ENCODE measurements at regions of chr5 and their contacts with region 1.

Region 1: GRCh38 chr5:172383191-172383802 is 71.0 kb downstream of the SH3PXD2B start:
- DNase-seq: peak; percentile 65 to 72
- H3K4me3 ChIP-seq: no peak overlapping the region
- H3K4me3 Mint-ChIP-seq: peak overlapping the region; percentile 37
- H3K27ac Mint-ChIP-seq: peak overlapping the region; percentile 63
- H3K4me1 ChIP-seq: peaks cover 28% of the 10 kb centered on the region
- H3K4me1 Mint-ChIP-seq: peaks cover 33% of the 10 kb centered on the region
- H3K27me3 ChIP-seq: no peaks in the 10 kb centered on the region
- H3K27me3 Mint-ChIP-seq: no peaks in the 10 kb centered on the region
- CTCF ChIP-seq: no peak

Region 2: GRCh38 chr5:171537070-171537849 is 846.0 kb before region 1 on chr5:
- CTCF ChIA-PET with region 1: no interaction called
- POLR2A ChIA-PET with region 1: no interaction called
- intact Hi-C with region 1: no loop called
- DNase-seq: no peak
- H3K4me3 ChIP-seq: no peak overlapping the region
- H3K4me3 Mint-ChIP-seq: no peak overlapping the region
- H3K27ac Mint-ChIP-seq: no peak overlapping the region
- H3K4me1 ChIP-seq: no peaks in the 10 kb centered on the region
- H3K4me1 Mint-ChIP-seq: peaks cover 9% of the 10 kb centered on the region
- H3K27me3 ChIP-seq: no peaks in the 10 kb centered on the region; the same call in 1 of the 2 replicates
- H3K27me3 Mint-ChIP-seq: peaks cover 19% of the 10 kb centered on the region
- CTCF ChIP-seq: no peak

Region 3: GRCh38 chr5:171865471-171865870 is 517.8 kb before region 1 on chr5:
- CTCF ChIA-PET with region 1: no interaction called
- POLR2A ChIA-PET with region 1: interaction called, 10 read pairs
- intact Hi-C with region 1: no loop called
- DNase-seq: no peak
- H3K4me3 ChIP-seq: no peak overlapping the region
- H3K4me3 Mint-ChIP-seq: no peak overlapping the region
- H3K27ac Mint-ChIP-seq: no peak overlapping the region
- H3K4me1 ChIP-seq: no peaks in the 10 kb centered on the region
- H3K4me1 Mint-ChIP-seq: no peaks in the 10 kb centered on the region
- H3K27me3 ChIP-seq: no peaks in the 10 kb centered on the region
- H3K27me3 Mint-ChIP-seq: no peaks in the 10 kb centered on the region
- CTCF ChIP-seq: no peak

Region 4: DNA sequence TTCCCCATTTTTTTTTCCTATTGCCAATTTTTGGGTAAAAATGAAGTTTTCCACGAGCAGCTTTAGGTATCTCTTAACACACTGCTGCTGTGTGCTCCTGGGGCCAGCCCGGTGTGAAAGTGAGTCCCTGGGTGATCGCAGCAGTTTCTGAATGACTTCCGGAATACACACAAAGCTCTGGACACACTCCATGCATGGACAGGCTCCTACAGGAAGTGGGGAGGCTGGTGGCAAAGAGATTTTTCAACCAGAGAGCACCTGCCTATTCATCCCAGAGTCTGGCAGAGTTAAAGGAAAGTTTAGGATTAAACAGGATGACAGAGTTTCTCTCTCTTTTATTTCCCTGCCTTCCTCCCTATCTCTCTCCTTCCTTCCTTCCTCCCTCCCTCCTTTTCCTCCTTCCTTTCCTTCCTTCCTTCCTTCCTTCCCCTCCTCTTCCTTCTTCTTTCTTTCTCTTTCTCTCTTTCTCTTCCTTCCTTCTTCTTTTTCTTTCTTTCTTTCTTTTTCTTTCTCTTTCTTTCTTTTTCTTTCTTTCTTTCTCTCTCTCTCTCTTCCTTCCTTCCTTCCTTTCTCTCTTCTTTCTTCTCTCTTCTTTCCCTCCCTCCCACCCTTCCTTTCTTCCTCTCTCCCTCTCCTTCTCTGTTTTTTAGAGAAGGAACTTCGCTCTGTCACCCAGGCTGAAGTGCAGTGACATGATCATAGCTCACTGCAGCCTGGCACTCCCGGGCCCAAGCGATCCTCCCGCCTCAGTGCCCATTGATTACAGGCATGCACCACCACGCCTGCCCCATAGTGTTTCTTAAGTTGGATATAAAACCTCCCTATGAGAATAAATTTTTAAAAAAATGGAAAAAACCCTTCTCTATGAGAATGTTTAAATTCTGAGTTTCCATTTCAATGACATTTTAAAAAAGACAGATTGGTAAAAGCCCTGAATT is 61.0 kb before region 1 on chr5:
- CTCF ChIA-PET with region 1: no interaction called
- POLR2A ChIA-PET with region 1: no interaction called
- intact Hi-C with region 1: no loop called
- DNase-seq: no peak
- H3K4me3 ChIP-seq: no peak overlapping the region
- H3K4me3 Mint-ChIP-seq: no peak overlapping the region
- H3K27ac Mint-ChIP-seq: no peak overlapping the region
- H3K4me1 ChIP-seq: 0 out of 2 replicates have a peak, but pooled peaks cover 5% of the 10 kb centered on the region
- H3K4me1 Mint-ChIP-seq: no peaks in the 10 kb centered on the region
- H3K27me3 ChIP-seq: no peaks in the 10 kb centered on the region
- H3K27me3 Mint-ChIP-seq: no peaks in the 10 kb centered on the region
- CTCF ChIP-seq: no peak

Region 5: DNA sequence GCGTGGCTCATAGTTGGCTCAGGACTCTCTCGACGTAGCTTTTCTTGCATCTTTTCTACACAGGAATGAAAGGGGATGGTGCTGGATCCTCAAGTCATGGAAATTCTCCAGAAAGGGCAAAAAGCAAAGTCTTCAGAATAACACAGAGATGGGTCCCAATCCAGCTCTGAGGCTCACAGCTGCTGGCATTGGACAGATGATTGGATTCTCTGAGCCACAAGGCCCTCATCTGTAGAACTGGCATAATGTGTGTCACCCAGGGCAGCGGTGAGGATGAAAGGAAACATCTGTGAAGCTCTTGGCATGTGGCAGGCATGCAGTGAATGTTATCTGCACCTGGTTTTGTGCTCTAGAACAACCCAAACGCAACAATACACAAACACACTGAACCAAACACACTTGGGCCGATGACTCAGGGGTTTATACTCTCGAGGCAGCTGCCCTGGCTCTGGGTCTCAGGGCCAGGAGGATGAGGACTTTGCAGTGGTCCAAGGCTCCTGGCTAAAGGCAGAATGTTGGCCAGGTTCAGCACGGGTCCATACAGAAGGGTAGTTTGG is 35.7 kb before region 1 on chr5:
- CTCF ChIA-PET with region 1: no interaction called
- POLR2A ChIA-PET with region 1: no interaction called
- intact Hi-C with region 1: loop called (anchors 1 kb)
- DNase-seq: peak in 1 of 2 experiments; percentile 18
- H3K4me3 ChIP-seq: no peak overlapping the region
- H3K4me3 Mint-ChIP-seq: peak overlapping the region; percentile 45
- H3K27ac Mint-ChIP-seq: peak overlapping the region; percentile 90
- H3K4me1 ChIP-seq: peaks cover 32% of the 10 kb centered on the region
- H3K4me1 Mint-ChIP-seq: peaks cover 35% of the 10 kb centered on the region
- H3K27me3 ChIP-seq: no peaks in the 10 kb centered on the region
- H3K27me3 Mint-ChIP-seq: no peaks in the 10 kb centered on the region
- CTCF ChIP-seq: no peak

Region 6: DNA sequence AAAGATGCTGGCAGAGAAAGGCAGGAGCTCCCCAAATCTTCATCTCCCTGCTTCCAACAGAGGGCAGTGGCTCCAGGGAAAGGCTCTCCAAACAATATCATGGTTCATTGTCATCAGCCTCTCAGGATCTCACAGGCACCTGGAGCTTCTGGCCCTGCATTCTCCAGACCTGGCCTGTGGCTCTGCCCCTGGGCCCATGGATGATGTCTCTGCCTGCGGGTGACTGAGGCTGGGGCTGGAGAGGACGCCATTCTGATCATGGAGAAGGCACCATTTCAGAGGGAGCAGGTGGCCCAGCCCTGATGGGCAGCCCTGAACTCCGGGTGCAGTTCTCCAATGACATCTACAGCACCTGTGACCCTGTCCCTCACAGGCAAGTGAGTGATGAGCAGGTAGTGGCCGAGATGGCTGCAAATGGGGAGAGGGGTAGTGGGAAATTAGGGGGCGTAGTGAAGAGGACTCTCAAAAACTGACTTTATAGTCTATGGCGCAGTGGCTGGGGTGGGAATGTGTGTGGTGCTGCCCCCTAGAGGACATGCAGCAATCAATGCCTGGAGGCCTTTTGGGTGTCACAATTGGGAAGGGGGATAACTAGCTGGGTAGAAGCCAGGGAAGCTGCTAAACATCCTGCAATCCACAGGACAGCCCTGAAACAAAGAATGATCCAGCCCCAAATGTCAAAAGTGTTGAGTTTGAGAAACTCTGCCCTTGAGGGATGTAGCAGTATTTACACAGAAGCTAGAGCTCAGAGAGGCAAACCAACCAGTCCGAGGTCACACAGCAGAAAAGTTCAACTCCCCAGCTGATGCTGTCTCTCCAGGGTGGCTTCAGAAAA is 67.8 kb after region 1 on chr5:
- CTCF ChIA-PET with region 1: no interaction called
- POLR2A ChIA-PET with region 1: interaction called, 3 read pairs
- intact Hi-C with region 1: loop called (anchors 1 kb)
- DNase-seq: peak in 1 of 2 experiments; percentile 58
- H3K4me3 ChIP-seq: no peak overlapping the region
- H3K4me3 Mint-ChIP-seq: no peak overlapping the region
- H3K27ac Mint-ChIP-seq: peak overlapping the region; percentile 51
- H3K4me1 ChIP-seq: 0 out of 2 replicates have a peak, but pooled peaks cover 4% of the 10 kb centered on the region
- H3K4me1 Mint-ChIP-seq: peaks cover 26% of the 10 kb centered on the region
- H3K27me3 ChIP-seq: no peaks in the 10 kb centered on the region
- H3K27me3 Mint-ChIP-seq: no peaks in the 10 kb centered on the region
- CTCF ChIP-seq: peak; percentile 66 to 71

Region 7: DNA sequence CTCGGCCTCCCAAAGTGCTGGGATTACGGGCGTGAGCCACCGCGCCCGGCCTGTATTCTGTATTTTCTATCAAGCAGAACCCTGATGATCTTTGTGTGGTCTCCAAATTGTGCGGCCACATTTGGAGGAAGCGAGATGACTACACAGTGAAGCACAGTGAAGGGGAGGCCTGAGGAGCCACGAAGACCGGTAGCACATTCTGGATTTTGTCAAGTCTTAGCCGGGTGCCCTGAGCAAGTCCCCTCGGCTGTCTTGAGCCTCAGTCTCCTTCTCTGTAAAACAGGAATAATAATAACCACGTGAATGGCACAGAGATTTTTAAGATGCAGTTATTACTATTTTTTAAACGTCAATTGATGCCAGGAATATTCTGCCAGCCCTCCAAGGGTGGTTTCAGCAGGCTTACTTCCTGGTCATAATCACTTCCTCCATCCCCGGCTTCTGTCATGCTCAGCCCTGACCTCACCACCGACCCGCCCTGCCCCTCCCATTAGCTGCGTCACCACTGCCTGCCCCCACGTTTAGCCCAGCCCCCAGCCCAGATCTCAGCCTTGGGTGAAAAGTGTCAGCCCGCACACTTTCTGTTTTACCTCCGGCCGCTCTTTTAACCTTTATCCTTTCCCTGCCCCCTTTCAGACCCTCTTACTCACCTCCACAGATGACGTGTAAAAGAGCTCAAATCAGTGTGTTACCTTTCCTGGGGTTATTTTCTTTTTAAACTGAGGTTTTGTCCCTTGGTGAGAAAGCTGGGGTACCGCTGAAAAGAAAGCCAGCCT is 423.8 kb after region 1 on chr5:
- CTCF ChIA-PET with region 1: no interaction called
- POLR2A ChIA-PET with region 1: no interaction called
- intact Hi-C with region 1: no loop called
- DNase-seq: peak; percentile 37 to 74
- H3K4me3 ChIP-seq: no peak overlapping the region
- H3K4me3 Mint-ChIP-seq: no peak overlapping the region
- H3K27ac Mint-ChIP-seq: peak overlapping the region; percentile 74
- H3K4me1 ChIP-seq: peaks cover 11% of the 10 kb centered on the region; the same call in 1 of the 2 replicates
- H3K4me1 Mint-ChIP-seq: no peaks in the 10 kb centered on the region
- H3K27me3 ChIP-seq: no peaks in the 10 kb centered on the region
- H3K27me3 Mint-ChIP-seq: no peaks in the 10 kb centered on the region
- CTCF ChIP-seq: no peak

Measured in Caco-2 (cell line).